ENCODE measurements at regions of chr1 and their contacts with region 1.

Region 1: GRCh38 chr1:70420320-70420719 is 9.3 kb downstream of the CTH start:
- DNase-seq: no peak
- H3K4me3 ChIP-seq: no peak overlapping the region
- H3K27ac ChIP-seq: no peak overlapping the region
- H3K4me1 ChIP-seq: no peaks in the 10 kb centered on the region
- H3K27me3 ChIP-seq: no peaks in the 10 kb centered on the region
- CTCF ChIP-seq: no peak

Region 2: GRCh38 chr1:70169018-70169839 is 251.1 kb before region 1 on chr1:
- CTCF ChIA-PET with region 1: no interaction called
- POLR2A ChIA-PET with region 1: no interaction called
- intact Hi-C with region 1: no loop called
- DNase-seq: no peak
- H3K4me3 ChIP-seq: no peak overlapping the region
- H3K27ac ChIP-seq: no peak overlapping the region
- H3K4me1 ChIP-seq: peaks cover 5% of the 10 kb centered on the region
- H3K27me3 ChIP-seq: no peaks in the 10 kb centered on the region
- CTCF ChIP-seq: no peak

Region 3: DNA sequence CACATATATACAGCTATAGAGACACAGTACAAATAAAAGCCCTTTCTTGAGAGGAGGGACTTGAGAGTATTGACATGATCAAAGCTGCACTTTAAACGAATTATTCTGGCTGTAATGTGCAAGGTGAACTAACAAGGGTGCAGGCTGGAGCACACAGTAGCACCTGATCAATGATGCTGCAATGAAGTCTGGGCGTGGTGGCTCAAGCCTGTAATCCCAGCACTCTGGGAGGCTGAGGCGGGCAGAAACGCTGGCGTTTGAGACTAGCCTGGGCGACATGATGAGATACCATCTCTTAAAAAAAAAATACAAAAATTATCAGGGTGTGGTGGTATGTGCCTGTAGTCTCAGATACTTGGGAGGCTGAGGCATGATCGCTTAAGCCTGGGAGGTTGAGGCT is 23.3 kb before region 1 on chr1:
- CTCF ChIA-PET with region 1: no interaction called
- POLR2A ChIA-PET with region 1: interaction called, 13 read pairs
- intact Hi-C with region 1: no loop called
- DNase-seq: no peak
- H3K4me3 ChIP-seq: no peak overlapping the region
- H3K27ac ChIP-seq: no peak overlapping the region
- H3K4me1 ChIP-seq: no peaks in the 10 kb centered on the region
- H3K27me3 ChIP-seq: no peaks in the 10 kb centered on the region
- CTCF ChIP-seq: no peak

Region 4: DNA sequence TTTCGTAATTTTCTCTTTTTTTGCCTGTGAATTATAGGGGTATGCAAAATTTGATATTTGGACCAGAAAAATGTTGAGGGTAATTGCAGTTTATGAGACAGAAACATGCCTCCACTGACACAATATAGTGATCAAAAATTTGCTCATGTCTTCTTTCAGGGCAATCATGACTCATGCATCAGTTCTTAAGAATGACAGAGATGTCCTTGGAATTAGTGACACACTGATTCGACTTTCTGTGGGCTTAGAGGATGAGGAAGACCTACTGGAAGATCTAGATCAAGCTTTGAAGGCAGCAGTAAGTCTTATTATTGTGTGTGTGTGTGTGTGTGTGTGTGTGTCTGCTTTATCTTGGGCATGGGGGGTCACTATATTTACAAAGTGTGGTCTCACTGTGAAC is 18.2 kb after region 1 on chr1:
- CTCF ChIA-PET with region 1: no interaction called
- POLR2A ChIA-PET with region 1: no interaction called
- intact Hi-C with region 1: no loop called
- DNase-seq: peak; percentile 49
- H3K4me3 ChIP-seq: no peak overlapping the region
- H3K27ac ChIP-seq: no peak overlapping the region
- H3K4me1 ChIP-seq: peaks cover 25% of the 10 kb centered on the region
- H3K27me3 ChIP-seq: no peaks in the 10 kb centered on the region
- CTCF ChIP-seq: no peak

Measured in A673 (cell line).